Uterus (tissue), 4 donors: ENCODE measurements at regions of chr15 and their contacts with region 1.

Region 1: DNA sequence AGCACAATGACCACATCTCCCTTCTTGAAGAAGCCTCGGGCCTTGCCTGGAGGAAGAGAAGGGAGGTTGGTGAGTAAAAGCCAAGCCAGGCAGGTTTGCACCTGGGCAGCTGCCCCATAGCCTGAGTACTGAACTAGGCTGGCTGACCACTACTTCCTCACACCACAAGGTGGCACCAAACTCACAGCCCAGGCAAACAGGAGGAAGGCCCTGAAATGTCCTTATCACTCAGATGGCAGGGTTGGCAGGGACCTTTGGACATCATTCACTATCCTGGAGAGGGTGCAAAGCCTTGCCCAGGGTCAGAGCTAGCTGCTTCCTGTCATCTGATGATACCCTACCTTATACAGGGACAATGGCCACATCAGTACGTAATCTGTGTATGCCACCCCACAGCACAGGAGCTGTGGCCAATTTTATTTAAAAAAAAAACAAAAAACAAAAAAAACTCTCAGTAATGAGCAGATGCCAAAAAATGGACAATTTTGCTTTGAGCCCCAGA is 2.2 kb upstream of the GRAMD2A start:
- DNase-seq: peak; percentile 69 to 73
- H3K4me3 ChIP-seq: no peak overlapping the region
- H3K27ac ChIP-seq: no peak overlapping the region
- H3K4me1 ChIP-seq: peaks cover 0 to 5% of the 10 kb centered on the region in 2 donors
- H3K27me3 ChIP-seq: peaks cover 0 to 11% of the 10 kb centered on the region in 2 donors
- CTCF ChIP-seq: peak; percentile 82 to 89 (median 86)
- POLR2A ChIP-seq: no peak

Region 2: DNA sequence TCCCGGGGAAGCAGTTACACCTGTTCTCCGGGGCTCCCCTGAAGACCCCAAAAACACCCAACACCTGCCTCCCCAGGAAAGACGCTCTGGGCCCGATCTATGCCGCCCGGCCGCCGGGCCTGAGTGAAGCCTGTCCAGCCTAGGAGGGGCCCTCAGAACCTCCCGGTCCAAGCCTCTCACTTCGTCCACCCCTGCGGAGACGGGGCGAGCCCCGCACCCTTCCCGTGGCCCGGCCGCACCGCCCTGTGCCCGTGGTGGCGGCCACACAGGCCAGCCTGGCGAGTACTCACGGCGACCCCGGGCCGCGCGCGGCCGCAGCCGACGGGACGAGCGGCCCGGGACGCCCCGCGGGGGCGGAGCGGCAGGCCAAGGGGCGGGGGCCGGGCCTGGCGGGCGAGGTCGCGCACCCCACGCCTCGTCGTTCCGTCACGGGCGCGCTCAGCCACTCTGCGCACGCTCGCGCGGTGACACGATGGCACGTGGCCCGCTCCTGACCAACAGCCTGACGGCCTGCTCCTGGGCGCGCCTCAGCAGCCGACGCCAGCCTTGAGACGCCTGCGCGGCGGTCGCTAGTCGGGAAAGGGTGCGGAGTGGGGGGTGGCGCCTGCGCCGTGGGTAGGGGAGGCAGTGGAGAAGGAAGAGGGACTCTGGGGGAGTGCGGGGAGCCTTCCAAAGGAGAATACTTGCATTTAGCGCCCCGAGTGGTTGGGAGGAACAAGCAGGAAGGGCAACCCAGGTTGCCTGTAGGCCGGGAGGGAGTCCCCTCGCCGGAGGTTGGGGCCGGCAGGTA is 72.6 kb after region 1 on chr15 and contains the start of gene PARP6:
- intact Hi-C with region 1: loop called (anchors 10 kb)
- DNase-seq: peak; percentile 98 to 99
- H3K4me3 ChIP-seq: peak within 1 kb of the TSS; percentile 88 to 93
- H3K27ac ChIP-seq: peak within 1 kb of the TSS; percentile 88 to 98
- H3K4me1 ChIP-seq: no peaks in the 10 kb centered on the region
- H3K27me3 ChIP-seq: no peaks in the 10 kb centered on the region
- CTCF ChIP-seq: peak; percentile 77 to 90 (median 82)
- POLR2A ChIP-seq: peak; percentile 59 to 83
- total RNA-seq, gene PARP6: 32.1 to 111 (median 55.6) TPM